ENCODE measurements at regions of chr18 and their contacts with region 1.

Region 1: GRCh38 chr18:6729247-6730091 is at the start of gene ARHGAP28:
- DNase-seq: peak; percentile 96 to 97
- H3K4me3 ChIP-seq: peak within 1 kb of the TSS; percentile 72
- H3K4me3 Mint-ChIP-seq: peak within 1 kb of the TSS; percentile 94
- H3K27ac Mint-ChIP-seq: peak within 1 kb of the TSS; percentile 96
- H3K4me1 ChIP-seq: peaks cover 39% of the 10 kb centered on the region
- H3K4me1 Mint-ChIP-seq: peaks cover 34% of the 10 kb centered on the region
- H3K27me3 ChIP-seq: no peaks in the 10 kb centered on the region
- H3K27me3 Mint-ChIP-seq: no peaks in the 10 kb centered on the region
- CTCF ChIP-seq: peak in 1 of 2 experiments; percentile 39
- total RNA-seq, gene ARHGAP28: 92.2 and 118 TPM in 2 replicates

Region 2: DNA sequence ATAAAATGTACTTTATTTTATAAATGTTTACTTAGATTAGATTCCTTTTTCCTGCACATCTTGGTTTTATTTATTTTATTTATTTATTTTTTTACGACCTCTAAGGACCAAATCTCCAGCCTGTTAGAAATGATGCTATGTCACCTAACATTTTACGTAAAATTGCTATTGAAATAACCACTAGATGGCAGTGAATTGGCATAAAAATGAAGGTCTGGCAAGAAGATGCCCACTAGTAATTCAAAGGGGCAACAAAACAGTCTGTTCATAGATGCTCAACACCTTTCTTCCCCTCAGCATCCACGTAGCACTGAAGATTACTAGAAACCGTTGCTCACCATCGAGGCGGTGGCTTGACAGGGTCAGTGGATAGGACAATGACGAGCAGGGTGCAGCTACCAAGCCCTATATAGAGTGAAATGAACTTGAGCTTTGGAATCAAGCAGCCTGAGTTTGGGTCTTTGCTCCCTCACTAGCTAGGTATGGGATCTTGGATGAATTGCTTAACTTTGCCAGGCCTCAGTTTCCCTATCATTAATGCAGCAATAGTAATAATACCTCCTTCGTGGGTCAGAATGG is 186.1 kb before region 1 on chr18:
- CTCF ChIA-PET with region 1: interaction called, 3 read pairs
- POLR2A ChIA-PET with region 1: no interaction called
- intact Hi-C with region 1: loop called (anchors 1 kb)
- DNase-seq: peak in 1 of 2 experiments; percentile 35
- H3K4me3 ChIP-seq: no peak overlapping the region
- H3K4me3 Mint-ChIP-seq: no peak overlapping the region
- H3K27ac Mint-ChIP-seq: no peak overlapping the region
- H3K4me1 ChIP-seq: peaks cover 7% of the 10 kb centered on the region
- H3K4me1 Mint-ChIP-seq: peaks cover 7% of the 10 kb centered on the region
- H3K27me3 ChIP-seq: no peaks in the 10 kb centered on the region
- H3K27me3 Mint-ChIP-seq: no peaks in the 10 kb centered on the region
- CTCF ChIP-seq: peak; percentile 64 to 65

Region 3: GRCh38 chr18:6661692-6662415 is 67.6 kb before region 1 on chr18:
- CTCF ChIA-PET with region 1: no interaction called
- POLR2A ChIA-PET with region 1: interaction called, 3 read pairs
- intact Hi-C with region 1: loop called (anchors 1 kb)
- DNase-seq: peak; percentile 77 to 79
- H3K4me3 ChIP-seq: no peak overlapping the region
- H3K4me3 Mint-ChIP-seq: peak overlapping the region; percentile 13
- H3K27ac Mint-ChIP-seq: peak overlapping the region; percentile 91
- H3K4me1 ChIP-seq: peaks cover 39% of the 10 kb centered on the region
- H3K4me1 Mint-ChIP-seq: peaks cover 32% of the 10 kb centered on the region
- H3K27me3 ChIP-seq: no peaks in the 10 kb centered on the region
- H3K27me3 Mint-ChIP-seq: no peaks in the 10 kb centered on the region
- CTCF ChIP-seq: peak in 1 of 2 experiments; percentile 13

Region 4: GRCh38 chr18:6683112-6683876 is 46.2 kb before region 1 on chr18:
- CTCF ChIA-PET with region 1: no interaction called
- POLR2A ChIA-PET with region 1: no interaction called
- intact Hi-C with region 1: loop called (anchors 2 kb)
- DNase-seq: peak; percentile 85 to 91
- H3K4me3 ChIP-seq: no peak overlapping the region; the same call in 1 of the 2 replicates
- H3K4me3 Mint-ChIP-seq: peak overlapping the region; percentile 78
- H3K27ac Mint-ChIP-seq: peak overlapping the region; percentile 86
- H3K4me1 ChIP-seq: peaks cover 25% of the 10 kb centered on the region
- H3K4me1 Mint-ChIP-seq: peaks cover 11% of the 10 kb centered on the region
- H3K27me3 ChIP-seq: no peaks in the 10 kb centered on the region
- H3K27me3 Mint-ChIP-seq: no peaks in the 10 kb centered on the region
- CTCF ChIP-seq: no peak

Region 5: DNA sequence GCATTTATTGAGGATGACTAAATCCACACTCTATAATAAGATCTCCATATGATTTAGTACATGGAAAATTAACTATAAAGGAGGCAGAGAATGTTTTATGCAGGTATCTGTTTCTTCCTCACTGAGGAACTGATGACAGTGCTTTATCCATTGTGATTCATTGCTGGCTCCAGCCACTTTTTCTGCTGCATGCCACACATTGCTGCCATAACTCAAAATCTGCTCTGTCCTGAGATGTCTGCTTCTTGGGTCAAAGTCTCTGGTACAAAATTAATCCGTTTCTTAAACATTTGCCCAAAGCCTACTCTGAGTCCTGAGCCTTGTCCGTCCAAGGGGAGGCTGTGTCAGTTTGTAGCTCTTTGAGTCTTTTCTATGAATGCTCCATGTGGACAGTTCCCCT is 15.5 kb before region 1 on chr18:
- CTCF ChIA-PET with region 1: interaction called, 3 read pairs
- POLR2A ChIA-PET with region 1: interaction called, 6 read pairs
- intact Hi-C with region 1: loop called (anchors 1 kb)
- DNase-seq: peak; percentile 72 to 75
- H3K4me3 ChIP-seq: no peak overlapping the region
- H3K4me3 Mint-ChIP-seq: peak overlapping the region; percentile 56
- H3K27ac Mint-ChIP-seq: peak overlapping the region; percentile 93
- H3K4me1 ChIP-seq: peaks cover 76% of the 10 kb centered on the region
- H3K4me1 Mint-ChIP-seq: peaks cover 55% of the 10 kb centered on the region
- H3K27me3 ChIP-seq: no peaks in the 10 kb centered on the region
- H3K27me3 Mint-ChIP-seq: no peaks in the 10 kb centered on the region
- CTCF ChIP-seq: no peak

Region 6: GRCh38 chr18:6781786-6782185 is 52.3 kb after region 1 on chr18:
- CTCF ChIA-PET with region 1: no interaction called
- POLR2A ChIA-PET with region 1: no interaction called
- intact Hi-C with region 1: loop called (anchors 5 kb)
- DNase-seq: no peak
- H3K4me3 ChIP-seq: no peak overlapping the region
- H3K4me3 Mint-ChIP-seq: peak overlapping the region; percentile 10
- H3K27ac Mint-ChIP-seq: peak overlapping the region; percentile 83
- H3K4me1 ChIP-seq: peaks cover 68% of the 10 kb centered on the region
- H3K4me1 Mint-ChIP-seq: peaks cover 54% of the 10 kb centered on the region
- H3K27me3 ChIP-seq: no peaks in the 10 kb centered on the region
- H3K27me3 Mint-ChIP-seq: no peaks in the 10 kb centered on the region
- CTCF ChIP-seq: no peak

Region 7: GRCh38 chr18:6885992-6886796 is 156.7 kb after region 1 on chr18:
- CTCF ChIA-PET with region 1: interaction called, 3 read pairs
- POLR2A ChIA-PET with region 1: no interaction called
- intact Hi-C with region 1: loop called (anchors 2 kb)
- DNase-seq: peak in 1 of 2 experiments; percentile 68
- H3K4me3 ChIP-seq: no peak overlapping the region
- H3K4me3 Mint-ChIP-seq: no peak overlapping the region
- H3K27ac Mint-ChIP-seq: no peak overlapping the region
- H3K4me1 ChIP-seq: no peaks in the 10 kb centered on the region
- H3K4me1 Mint-ChIP-seq: no peaks in the 10 kb centered on the region
- H3K27me3 ChIP-seq: no peaks in the 10 kb centered on the region
- H3K27me3 Mint-ChIP-seq: no peaks in the 10 kb centered on the region
- CTCF ChIP-seq: peak; percentile 67 to 78

Measured in Caco-2 (cell line).